MCF 10A (cell line): ENCODE measurements at regions of chr18 and their contacts with region 1.

Region 1: GRCh38 chr18:658001-658946 is 821 bp downstream of the TYMS start:
- DNase-seq: peak; percentile 94
- H3K4me3 Mint-ChIP-seq: peak overlapping the region; percentile 81
- H3K27ac Mint-ChIP-seq: no peak overlapping the region
- H3K4me1 Mint-ChIP-seq: peaks cover 6% of the 10 kb centered on the region
- H3K27me3 Mint-ChIP-seq: no peaks in the 10 kb centered on the region
- CTCF ChIP-seq: no peak

Region 2: DNA sequence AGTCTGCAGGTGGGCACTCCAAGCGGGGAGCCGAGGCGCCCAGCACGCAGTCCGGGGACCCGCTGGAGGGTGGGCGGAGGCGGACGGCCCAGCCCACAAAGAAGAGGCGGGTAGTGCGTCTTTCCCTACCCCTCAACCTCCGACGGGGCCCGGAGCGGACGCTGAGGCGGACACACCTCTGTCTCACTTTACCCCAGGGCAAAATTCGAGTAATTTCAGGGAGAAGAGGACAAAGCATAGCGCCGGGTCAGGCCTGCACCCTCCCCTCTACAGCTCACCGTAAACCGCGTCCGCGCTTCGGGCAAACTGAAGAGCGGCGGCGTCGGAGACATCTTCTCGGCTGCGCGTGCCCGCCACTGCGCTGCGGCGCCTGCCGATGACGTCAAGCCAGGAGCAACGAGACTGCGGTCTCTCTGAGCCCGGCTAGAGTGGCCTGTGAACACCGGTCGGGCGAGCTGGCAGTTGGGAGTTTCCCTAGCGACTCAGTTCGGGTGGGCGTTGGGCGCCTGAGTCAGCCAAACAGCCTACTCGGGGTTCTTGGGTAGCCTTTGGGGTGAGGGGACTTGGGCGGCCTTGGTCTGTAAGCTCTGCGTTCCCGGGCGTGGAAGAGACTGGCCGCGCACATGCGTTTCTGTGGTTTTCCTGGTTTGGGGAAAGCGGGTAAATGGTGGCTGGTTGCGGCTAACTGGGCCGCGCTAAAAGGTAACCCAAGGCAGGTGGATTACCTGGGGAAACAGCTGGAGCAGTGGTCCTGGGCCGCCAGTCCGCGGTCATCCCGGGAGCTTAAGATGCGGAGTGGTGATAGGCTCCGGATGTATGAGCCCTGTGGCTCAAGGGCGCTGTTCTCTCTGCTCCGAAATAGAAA is 390.4 kb before region 1 on chr18 and contains the start of gene THOC1:
- CTCF ChIA-PET with region 1: interaction called, 3 read pairs
- POLR2A ChIA-PET with region 1: interaction called, 13 read pairs
- intact Hi-C with region 1: no loop called
- DNase-seq: peak; percentile 90
- H3K4me3 Mint-ChIP-seq: peak within 1 kb of the TSS; percentile 100
- H3K27ac Mint-ChIP-seq: peak within 1 kb of the TSS; percentile 100
- H3K4me1 Mint-ChIP-seq: peaks cover 6% of the 10 kb centered on the region
- H3K27me3 Mint-ChIP-seq: no peaks in the 10 kb centered on the region
- CTCF ChIP-seq: no peak
- total RNA-seq, gene THOC1: 40.9 and 44.6 TPM in 2 replicates

Region 3: GRCh38 chr18:623761-624620 is 34.3 kb before region 1 on chr18:
- CTCF ChIA-PET with region 1: interaction called, 11 read pairs
- POLR2A ChIA-PET with region 1: interaction called, 14 read pairs
- intact Hi-C with region 1: no loop called
- DNase-seq: peak; percentile 69
- H3K4me3 Mint-ChIP-seq: no peak overlapping the region
- H3K27ac Mint-ChIP-seq: no peak overlapping the region
- H3K4me1 Mint-ChIP-seq: peaks cover 8% of the 10 kb centered on the region
- H3K27me3 Mint-ChIP-seq: peaks cover 24% of the 10 kb centered on the region
- CTCF ChIP-seq: peak; percentile 62

Region 4: DNA sequence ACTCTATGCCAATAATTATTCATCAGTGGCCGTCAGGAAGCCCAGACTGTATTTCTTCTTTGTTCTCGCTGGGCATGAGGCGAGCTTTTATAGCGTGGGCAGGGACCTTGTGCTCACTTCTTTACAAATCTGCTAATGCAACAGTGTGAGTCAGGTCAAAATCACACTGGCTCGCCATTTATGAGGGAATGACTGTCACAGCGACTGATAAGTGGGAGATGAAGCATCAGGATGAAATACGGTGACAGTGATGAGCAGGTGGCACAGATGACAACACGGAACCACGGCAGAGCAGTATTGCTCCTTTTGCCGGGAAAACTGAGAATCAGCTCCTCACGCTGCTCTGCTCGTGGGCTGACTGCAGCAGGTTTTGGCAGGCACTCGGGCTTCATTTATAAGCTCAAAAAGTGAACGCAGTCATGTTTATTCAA is 19.7 kb after region 1 on chr18:
- CTCF ChIA-PET with region 1: interaction called, 3 read pairs
- POLR2A ChIA-PET with region 1: interaction called, 12 read pairs
- intact Hi-C with region 1: no loop called
- DNase-seq: no peak
- H3K4me3 Mint-ChIP-seq: no peak overlapping the region
- H3K27ac Mint-ChIP-seq: no peak overlapping the region
- H3K4me1 Mint-ChIP-seq: no peaks in the 10 kb centered on the region
- H3K27me3 Mint-ChIP-seq: no peaks in the 10 kb centered on the region
- CTCF ChIP-seq: no peak

Region 5: DNA sequence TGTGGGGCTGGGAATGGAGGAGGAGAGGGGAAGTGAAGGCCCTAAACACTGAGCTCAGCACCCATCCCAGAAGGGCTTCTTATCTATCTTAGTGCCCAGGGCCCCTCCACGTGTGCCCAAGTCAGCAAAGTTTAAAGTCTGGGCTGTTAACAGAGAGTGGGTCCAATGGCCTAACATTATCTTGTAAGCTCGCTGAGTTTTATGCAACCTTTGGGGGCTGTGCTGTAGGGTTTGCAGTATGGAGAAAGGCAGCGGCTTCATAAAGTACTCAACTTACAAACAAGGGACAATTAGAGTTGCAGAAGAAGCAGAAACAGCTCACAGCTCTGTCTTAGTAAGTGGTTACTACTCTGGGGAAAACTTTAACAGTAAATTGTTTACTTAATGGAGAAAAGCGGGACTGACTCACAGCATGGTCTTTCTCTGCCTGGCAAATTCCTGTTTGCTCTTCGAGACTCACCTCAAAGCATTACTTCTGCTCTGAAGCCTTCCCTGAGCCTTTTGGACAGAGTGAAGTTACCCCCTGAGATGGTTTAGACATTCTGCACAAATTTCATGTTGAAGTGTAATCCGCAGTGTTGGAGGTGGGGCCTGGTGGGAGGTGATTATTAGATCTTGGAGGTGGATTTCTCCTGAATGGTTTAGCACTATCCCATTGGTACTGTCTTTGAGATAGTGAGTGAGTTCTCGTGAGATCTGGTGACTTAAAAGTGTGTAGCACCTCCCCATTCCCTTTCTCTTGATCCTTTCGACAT is 45.1 kb after region 1 on chr18:
- CTCF ChIA-PET with region 1: interaction called, 3 read pairs
- POLR2A ChIA-PET with region 1: interaction called, 20 read pairs
- intact Hi-C with region 1: no loop called
- DNase-seq: peak; percentile 47
- H3K4me3 Mint-ChIP-seq: peak overlapping the region; percentile 4
- H3K27ac Mint-ChIP-seq: peak overlapping the region; percentile 54
- H3K4me1 Mint-ChIP-seq: peaks cover 14% of the 10 kb centered on the region
- H3K27me3 Mint-ChIP-seq: no peaks in the 10 kb centered on the region
- CTCF ChIP-seq: no peak

Region 6: DNA sequence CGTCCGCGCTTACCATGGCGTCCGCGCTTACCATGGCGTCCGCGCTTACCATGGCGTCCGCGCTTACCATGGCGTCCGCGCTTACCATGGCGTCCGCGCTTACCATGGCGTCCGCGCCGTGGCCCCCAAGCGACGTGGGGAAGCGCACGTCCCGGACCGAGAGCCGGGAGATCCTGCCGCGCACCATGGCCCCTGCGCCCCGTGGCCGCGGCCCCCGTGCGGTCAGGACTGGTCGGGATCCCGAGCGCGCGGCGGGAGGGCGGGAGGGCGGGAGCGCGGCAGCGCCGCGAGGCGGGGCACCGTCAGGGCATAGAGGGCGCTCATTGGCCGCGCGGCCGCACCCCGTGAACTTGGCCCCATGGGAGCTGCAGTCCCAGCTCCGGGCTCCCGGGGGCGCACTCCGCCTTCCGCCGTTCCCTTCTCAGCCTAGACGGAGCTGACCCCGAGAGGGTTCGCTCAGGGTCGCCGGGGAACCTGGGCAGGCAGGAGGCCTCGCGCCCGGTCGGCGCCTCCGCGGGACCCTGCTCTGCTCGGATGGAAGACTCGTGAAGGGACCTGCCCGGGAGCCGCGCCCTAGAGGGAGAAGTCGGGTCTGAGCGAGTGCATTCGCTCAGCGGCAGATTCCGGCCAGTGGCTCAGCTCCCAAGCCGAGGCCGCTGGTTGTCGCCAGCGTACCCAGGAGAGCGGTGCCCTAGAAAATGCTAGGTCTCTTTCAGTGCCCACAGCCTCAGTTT is 54.3 kb after region 1 on chr18 and contains the start of gene ENOSF1:
- CTCF ChIA-PET with region 1: interaction called, 3 read pairs
- POLR2A ChIA-PET with region 1: interaction called, 5 read pairs
- intact Hi-C with region 1: loop called (anchors 5 kb)
- DNase-seq: peak; percentile 86
- H3K4me3 Mint-ChIP-seq: peak within 1 kb of the TSS; percentile 88
- H3K27ac Mint-ChIP-seq: peak within 1 kb of the TSS; percentile 96
- H3K4me1 Mint-ChIP-seq: peaks cover 11% of the 10 kb centered on the region
- H3K27me3 Mint-ChIP-seq: no peaks in the 10 kb centered on the region
- CTCF ChIP-seq: peak; percentile 97
- total RNA-seq, gene ENOSF1: 106 and 111 TPM in 2 replicates

Region 7: GRCh38 chr18:785242-785641 is 127.0 kb after region 1 on chr18:
- CTCF ChIA-PET with region 1: no interaction called
- POLR2A ChIA-PET with region 1: no interaction called
- intact Hi-C with region 1: no loop called
- DNase-seq: no peak
- H3K4me3 Mint-ChIP-seq: no peak overlapping the region
- H3K27ac Mint-ChIP-seq: no peak overlapping the region
- H3K4me1 Mint-ChIP-seq: no peaks in the 10 kb centered on the region
- H3K27me3 Mint-ChIP-seq: no peaks in the 10 kb centered on the region
- CTCF ChIP-seq: no peak

Region 8: GRCh38 chr18:2547477-2548087 is 1889.3 kb after region 1 on chr18:
- CTCF ChIA-PET with region 1: no interaction called
- POLR2A ChIA-PET with region 1: no interaction called
- intact Hi-C with region 1: no loop called
- DNase-seq: peak; percentile 55
- H3K4me3 Mint-ChIP-seq: no peak overlapping the region
- H3K27ac Mint-ChIP-seq: peak overlapping the region; percentile 23
- H3K4me1 Mint-ChIP-seq: no peaks in the 10 kb centered on the region
- H3K27me3 Mint-ChIP-seq: no peaks in the 10 kb centered on the region
- CTCF ChIP-seq: peak; percentile 58